Heart left ventricle (tissue), 16 donors: ENCODE measurements at regions of chr5 and their contacts with region 1.

Region 1: GRCh38 chr5:141960449-141961202 is 2.6 kb upstream of the PCDH12 start:
- DNase-seq: peak; percentile 88 to 93 (median 89)
- ATAC-seq: peak; percentile 70 to 83 (median 77)
- H3K4me3 ChIP-seq: no peak overlapping the region
- H3K27ac ChIP-seq: peak overlapping the region in 9 of 12 donors; percentile 17 to 85 (median 58)
- H3K4me1 ChIP-seq: peaks cover 0 to 55% (median 32%) of the 10 kb centered on the region in 12 donors
- H3K27me3 ChIP-seq: no peaks in the 10 kb centered on the region
- CTCF ChIP-seq: peak; percentile 84 to 93 (median 88)
- POLR2A ChIP-seq: no peak

Region 2: DNA sequence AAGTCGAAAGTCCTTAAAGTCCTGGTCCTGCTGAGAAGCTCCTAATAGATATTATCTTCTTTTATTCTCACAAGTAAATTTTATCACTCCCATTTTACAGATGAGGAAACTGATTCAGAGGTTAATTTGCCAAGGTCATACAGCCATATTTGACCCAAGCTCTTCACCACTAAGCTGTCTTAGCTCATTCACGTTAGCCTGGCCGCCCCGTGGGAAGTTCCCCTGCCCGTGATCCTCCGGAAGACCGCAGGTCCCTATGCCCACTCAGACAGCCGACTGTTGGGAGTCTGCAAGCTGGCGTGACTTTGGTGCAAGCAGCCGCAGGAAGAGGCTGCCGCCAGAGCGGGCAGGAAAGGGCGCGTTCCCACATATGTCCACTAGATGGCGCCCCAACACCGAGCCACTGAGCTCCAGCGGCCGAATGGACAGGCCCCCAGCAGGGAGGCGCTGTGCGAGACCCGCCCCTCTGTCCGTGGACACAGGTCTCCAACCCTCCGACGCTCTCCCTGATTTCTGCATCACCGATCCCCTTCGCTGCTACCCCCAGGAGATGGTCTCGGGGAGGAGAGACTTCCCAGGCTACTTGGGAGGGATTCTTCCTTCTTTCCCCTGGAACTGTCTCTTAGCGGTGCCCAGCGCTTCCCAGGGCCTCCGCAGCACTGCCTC is 268.6 kb before region 1 on chr5:
- intact Hi-C with region 1: loop called (anchors 1 to 2 kb)
- DNase-seq: peak; percentile 85 to 93 (median 87)
- ATAC-seq: peak; percentile 79 to 91 (median 90)
- H3K4me3 ChIP-seq: peak overlapping the region in 11 of 12 donors; percentile 11 to 51 (median 37)
- H3K27ac ChIP-seq: no peak overlapping the region
- H3K4me1 ChIP-seq: peaks cover 0 to 28% (median 10%) of the 10 kb centered on the region in 12 donors
- H3K27me3 ChIP-seq: peaks cover 0 to 3% (median 0%) of the 10 kb centered on the region in 9 donors
- CTCF ChIP-seq: peak; percentile 98 to 100 (median 99)
- POLR2A ChIP-seq: no peak

Region 3: DNA sequence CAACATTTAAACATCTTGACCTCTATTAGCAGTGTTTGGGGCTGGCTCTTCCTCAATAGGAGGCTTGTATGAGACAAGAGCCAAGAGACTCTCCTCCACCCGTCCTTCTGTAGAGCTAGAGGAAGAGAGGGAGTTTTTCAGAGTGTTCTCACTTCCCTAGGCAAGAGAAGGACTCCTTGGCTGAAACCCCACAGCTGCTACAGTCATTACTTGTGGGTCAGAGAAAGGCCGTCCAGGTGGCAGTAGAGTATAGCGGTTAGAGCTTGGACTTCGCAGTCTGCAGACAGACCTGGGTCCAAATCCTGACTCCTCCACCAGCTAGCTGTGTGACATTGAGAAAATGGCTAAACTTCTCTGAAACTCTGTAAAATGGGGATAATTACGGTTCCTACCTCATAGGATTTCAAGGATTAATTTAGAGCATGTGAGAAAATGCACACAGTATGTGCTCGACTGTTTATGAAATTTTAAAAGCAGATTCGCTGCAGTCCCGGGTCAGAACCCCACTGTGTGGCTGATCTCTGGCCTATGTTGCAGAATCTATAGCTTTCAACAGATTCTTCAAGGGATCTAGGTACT is 197.7 kb before region 1 on chr5:
- intact Hi-C with region 1: loop called in 1 of 10 experiments (anchors 5 kb)
- DNase-seq: peak in 3 of 5 donors; percentile 10 to 45 (median 42)
- ATAC-seq: peak; percentile 40 to 89 (median 56)
- H3K4me3 ChIP-seq: no peak overlapping the region
- H3K27ac ChIP-seq: no peak overlapping the region
- H3K4me1 ChIP-seq: peaks cover 0 to 29% (median 16%) of the 10 kb centered on the region in 12 donors
- H3K27me3 ChIP-seq: peaks cover 0 to 24% (median 8%) of the 10 kb centered on the region in 9 donors
- CTCF ChIP-seq: peak in 7 of 12 donors; percentile 19 to 46 (median 24)
- POLR2A ChIP-seq: no peak

Region 4: DNA sequence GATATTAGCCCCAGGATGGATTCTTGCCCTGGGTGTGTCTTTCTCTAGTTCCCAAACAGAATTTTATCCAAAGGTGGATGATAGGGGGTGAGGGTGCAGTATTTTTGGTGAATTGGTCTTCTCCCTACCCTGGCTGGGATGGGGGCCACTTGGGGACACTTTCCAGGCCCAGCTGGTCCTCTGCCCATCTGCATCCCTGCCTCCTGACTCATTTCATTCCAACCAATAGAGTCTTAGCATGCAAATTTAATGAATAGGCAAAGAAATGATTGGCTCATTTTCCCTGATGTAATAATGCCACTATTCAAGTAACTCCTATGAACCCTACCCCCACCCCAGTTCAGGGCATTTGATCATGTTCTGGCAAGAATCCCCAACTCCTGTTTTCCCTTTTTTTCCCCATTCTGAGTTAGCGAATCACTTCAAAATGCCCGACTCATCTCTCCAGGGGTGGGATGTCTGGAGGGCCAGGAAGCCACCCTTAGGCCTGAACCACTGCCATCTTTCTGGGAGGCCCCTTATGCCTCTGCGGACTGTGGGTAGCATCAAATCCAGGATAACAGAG is 139.2 kb before region 1 on chr5:
- intact Hi-C with region 1: loop called in 1 of 10 experiments (anchors 2 kb)
- DNase-seq: no peak
- ATAC-seq: peak in 2 of 4 donors; percentile 17 to 23
- H3K4me3 ChIP-seq: no peak overlapping the region
- H3K27ac ChIP-seq: peak overlapping the region; percentile 43 to 78 (median 59)
- H3K4me1 ChIP-seq: peaks cover 0 to 41% (median 15%) of the 10 kb centered on the region in 12 donors
- H3K27me3 ChIP-seq: peaks cover 0 to 3% (median 0%) of the 10 kb centered on the region in 9 donors
- CTCF ChIP-seq: no peak
- POLR2A ChIP-seq: no peak

Region 5: DNA sequence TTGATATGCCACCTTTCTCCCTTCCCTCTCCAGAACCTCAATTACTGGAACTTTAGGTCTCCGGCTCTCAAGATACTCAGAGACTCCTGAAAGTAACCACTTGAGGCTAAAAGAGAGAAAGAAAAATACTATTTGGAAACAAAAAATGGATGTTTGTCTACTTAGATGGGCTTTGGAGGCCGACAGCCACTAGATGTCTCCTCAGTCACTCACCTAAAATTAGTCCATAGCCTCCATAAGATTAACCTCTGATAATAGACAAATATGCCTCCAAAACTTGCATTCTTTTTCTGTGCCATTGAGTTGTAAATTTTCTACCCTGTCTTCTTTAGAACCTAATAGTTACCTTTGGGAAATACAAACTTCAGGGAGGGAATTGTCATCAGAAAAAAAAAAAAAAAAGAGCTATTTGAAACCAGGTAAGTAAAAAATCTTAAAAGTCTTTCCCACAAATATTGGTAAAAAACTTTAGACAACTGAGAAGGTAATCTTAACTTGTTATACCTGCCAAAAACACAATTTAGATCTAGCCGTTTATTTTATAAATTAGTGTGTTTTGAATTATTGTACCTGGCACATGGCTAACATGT is 71.2 kb before region 1 on chr5:
- intact Hi-C with region 1: loop called in 6 of 10 experiments (anchors 5 kb)
- DNase-seq: no peak
- ATAC-seq: no peak
- H3K4me3 ChIP-seq: no peak overlapping the region
- H3K27ac ChIP-seq: no peak overlapping the region
- H3K4me1 ChIP-seq: no peaks in the 10 kb centered on the region
- H3K27me3 ChIP-seq: peaks cover 0 to 21% (median 0%) of the 10 kb centered on the region in 9 donors
- CTCF ChIP-seq: peak in 8 of 12 donors; percentile 9 to 43 (median 32)
- POLR2A ChIP-seq: no peak

Region 6: GRCh38 chr5:141923448-141924352 is 36.9 kb before region 1 on chr5 and contains the start of gene DELE1:
- intact Hi-C with region 1: loop called in 6 of 10 experiments (anchors 2 to 5 kb)
- DNase-seq: peak; percentile 96 to 98 (median 97)
- ATAC-seq: peak; percentile 97 to 99 (median 98)
- H3K4me3 ChIP-seq: peak within 1 kb of the TSS; percentile 19 to 90 (median 66)
- H3K27ac ChIP-seq: peak within 1 kb of the TSS; percentile 89 to 99 (median 96)
- H3K4me1 ChIP-seq: peaks cover 4 to 46% (median 24%) of the 10 kb centered on the region in 12 donors
- H3K27me3 ChIP-seq: no peaks in the 10 kb centered on the region
- CTCF ChIP-seq: peak in 3 of 12 donors; percentile 8 to 18 (median 9)
- POLR2A ChIP-seq: peak; percentile 13 to 87
- total RNA-seq, gene DELE1: 63.1 to 174 (median 96.0) TPM

Region 7: DNA sequence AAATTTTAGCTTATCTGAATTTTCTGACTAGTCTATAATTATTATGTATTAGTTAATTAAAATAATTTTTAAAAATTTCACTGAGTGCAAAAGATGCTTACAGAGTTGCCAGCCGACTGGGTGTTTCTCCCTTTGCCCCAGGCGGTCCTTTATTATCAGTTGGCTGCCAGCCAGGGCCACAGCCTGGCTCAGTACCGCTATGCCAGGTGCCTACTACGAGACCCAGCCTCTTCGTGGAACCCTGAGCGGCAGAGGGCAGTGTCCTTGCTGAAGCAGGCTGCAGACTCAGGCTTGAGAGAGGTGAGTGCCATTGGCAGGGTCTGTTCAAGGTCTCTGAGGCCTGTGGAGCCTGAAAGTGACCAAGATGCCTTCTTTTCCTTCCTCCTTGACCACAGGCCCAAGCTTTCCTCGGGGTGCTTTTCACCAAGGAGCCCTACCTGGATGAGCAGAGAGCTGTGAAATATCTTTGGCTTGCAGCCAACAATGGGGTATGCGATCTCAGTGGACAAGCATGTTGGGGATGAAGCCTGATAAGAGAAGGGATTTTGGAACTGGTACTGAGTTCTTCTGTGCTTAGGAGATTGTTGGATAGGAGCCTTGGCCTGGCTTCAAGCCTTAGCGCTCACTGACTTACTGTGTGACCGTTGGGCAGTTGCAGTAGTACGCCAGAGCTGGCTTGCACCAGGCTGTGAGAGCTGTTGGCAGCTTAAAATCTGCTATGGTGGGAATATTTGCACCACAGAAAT is 26.4 kb before region 1 on chr5:
- intact Hi-C with region 1: no loop called
- DNase-seq: peak in 4 of 5 donors; percentile 60 to 65 (median 62)
- ATAC-seq: peak; percentile 65 to 86 (median 78)
- H3K4me3 ChIP-seq: no peak overlapping the region
- H3K27ac ChIP-seq: peak overlapping the region in 9 of 12 donors; percentile 4 to 63 (median 35)
- H3K4me1 ChIP-seq: peaks cover 0 to 34% (median 15%) of the 10 kb centered on the region in 12 donors
- H3K27me3 ChIP-seq: no peaks in the 10 kb centered on the region
- CTCF ChIP-seq: peak in 4 of 12 donors; percentile 8 to 37 (median 24)
- POLR2A ChIP-seq: no peak

Region 8: GRCh38 chr5:142024771-142025304 is 64.2 kb after region 1 on chr5:
- intact Hi-C with region 1: no loop called
- DNase-seq: peak; percentile 87 to 94 (median 93)
- ATAC-seq: peak; percentile 99 to 100 (median 100)
- H3K4me3 ChIP-seq: peak overlapping the region; percentile 24 to 61 (median 54)
- H3K27ac ChIP-seq: peak overlapping the region; percentile 72 to 91 (median 85)
- H3K4me1 ChIP-seq: peaks cover 0 to 12% (median 0%) of the 10 kb centered on the region in 12 donors
- H3K27me3 ChIP-seq: no peaks in the 10 kb centered on the region
- CTCF ChIP-seq: no peak
- POLR2A ChIP-seq: peak in 1 of 2 donors; percentile 45

Region 9: DNA sequence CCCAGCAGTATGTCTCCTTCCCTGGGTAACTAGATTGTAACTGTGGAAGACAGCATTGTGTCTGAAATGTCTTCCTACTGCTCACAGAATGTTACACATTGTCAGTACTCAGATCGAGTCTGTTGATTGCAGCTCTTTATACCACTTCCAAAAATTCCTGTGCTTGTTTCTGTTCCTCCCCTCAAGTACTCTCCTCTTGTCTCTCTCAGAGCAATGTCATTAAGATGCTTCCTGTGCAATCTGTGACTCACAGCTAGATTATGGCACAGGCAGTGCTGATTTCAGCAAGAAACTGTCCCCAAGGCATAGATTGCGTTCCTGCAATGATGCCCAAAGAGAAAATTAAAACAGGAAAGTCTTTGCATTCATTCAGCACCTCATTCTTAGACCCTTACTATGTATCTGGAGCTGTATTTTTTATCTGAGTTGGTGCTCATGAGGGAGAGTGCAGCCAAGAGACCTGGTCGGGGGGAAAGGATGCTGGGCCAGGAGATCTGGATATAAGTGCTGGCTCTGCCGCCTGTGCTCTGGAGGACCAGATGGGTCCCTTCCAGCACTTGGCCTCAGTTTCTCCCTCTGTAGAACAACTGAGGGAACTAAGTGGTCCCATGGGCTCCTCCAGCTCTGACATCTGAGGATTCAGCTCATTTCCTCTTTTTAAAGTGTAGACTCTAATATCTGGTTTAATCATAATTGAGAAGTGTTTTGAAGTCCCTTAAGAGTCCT is 93.0 kb after region 1 on chr5:
- intact Hi-C with region 1: no loop called
- DNase-seq: peak in 3 of 5 donors; percentile 22 to 33 (median 30)
- ATAC-seq: peak; percentile 48 to 91 (median 84)
- H3K4me3 ChIP-seq: no peak overlapping the region
- H3K27ac ChIP-seq: peak overlapping the region in 5 of 12 donors; percentile 20 to 79 (median 39)
- H3K4me1 ChIP-seq: peaks cover 0 to 32% (median 10%) of the 10 kb centered on the region in 12 donors
- H3K27me3 ChIP-seq: no peaks in the 10 kb centered on the region
- CTCF ChIP-seq: no peak
- POLR2A ChIP-seq: no peak

Region 10: DNA sequence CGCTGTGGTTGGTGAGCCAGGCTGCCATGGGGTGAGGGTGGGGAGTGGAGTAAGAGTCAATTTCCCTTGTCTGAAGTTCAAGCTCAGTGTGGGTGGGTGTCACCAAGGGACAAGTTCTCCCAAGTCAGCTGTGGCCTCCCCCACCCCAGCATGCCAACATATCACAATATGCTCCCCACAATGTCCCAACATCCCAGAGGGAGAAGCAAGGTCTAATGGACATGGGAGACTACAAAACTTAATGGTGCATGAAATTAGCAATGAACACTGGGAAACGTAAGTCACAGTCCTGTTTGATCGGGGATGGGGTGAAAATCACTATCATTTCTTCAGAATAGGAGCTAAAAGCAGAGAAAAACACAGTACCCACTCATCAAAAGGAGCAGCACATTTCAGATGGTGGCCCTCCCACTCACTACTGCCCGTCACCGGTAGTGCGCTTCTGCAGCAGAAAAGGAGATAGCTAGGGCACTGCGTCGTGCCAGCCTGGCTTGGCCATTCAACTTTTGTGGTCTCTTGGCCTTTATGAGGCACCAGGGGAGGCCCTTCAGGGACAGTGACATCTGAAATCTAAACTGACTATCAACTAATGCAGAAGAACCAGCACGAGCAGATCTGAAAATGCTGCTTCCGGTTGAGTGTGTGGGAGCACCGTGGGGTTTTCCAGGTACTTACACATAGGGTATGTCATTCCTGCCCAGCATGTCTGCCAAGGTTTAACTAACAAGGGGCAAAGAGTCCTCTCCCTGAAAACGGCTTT is 127.5 kb after region 1 on chr5:
- intact Hi-C with region 1: no loop called
- DNase-seq: no peak
- ATAC-seq: no peak
- H3K4me3 ChIP-seq: no peak overlapping the region
- H3K27ac ChIP-seq: no peak overlapping the region
- H3K4me1 ChIP-seq: peaks cover 0 to 5% (median 0%) of the 10 kb centered on the region in 12 donors
- H3K27me3 ChIP-seq: no peaks in the 10 kb centered on the region
- CTCF ChIP-seq: no peak
- POLR2A ChIP-seq: no peak